ENCODE measurements at regions of chr1 and their contacts with region 1.

Region 1: GRCh38 chr1:66253330-66253921 is 280.5 kb upstream of the SGIP1 start:
- DNase-seq: peak; percentile 89
- H3K4me3 ChIP-seq: no peak overlapping the region
- H3K27ac ChIP-seq: no peak overlapping the region
- H3K4me1 ChIP-seq: peaks cover 6% of the 10 kb centered on the region
- H3K27me3 ChIP-seq: no peaks in the 10 kb centered on the region
- CTCF ChIP-seq: peak; percentile 60
- POLR2A ChIP-seq: no peak

Region 2: GRCh38 chr1:66242646-66243547 is 10.5 kb before region 1 on chr1:
- CTCF ChIA-PET with region 1: interaction called, 10 read pairs
- POLR2A ChIA-PET with region 1: no interaction called
- dilution Hi-C with region 1: no loop called
- intact Hi-C with region 1: no loop called
- DNase-seq: peak; percentile 85
- H3K4me3 ChIP-seq: no peak overlapping the region
- H3K27ac ChIP-seq: peak overlapping the region; percentile 64
- H3K4me1 ChIP-seq: peaks cover 26% of the 10 kb centered on the region
- H3K27me3 ChIP-seq: no peaks in the 10 kb centered on the region
- CTCF ChIP-seq: peak; percentile 98 to 100
- POLR2A ChIP-seq: no peak

Region 3: DNA sequence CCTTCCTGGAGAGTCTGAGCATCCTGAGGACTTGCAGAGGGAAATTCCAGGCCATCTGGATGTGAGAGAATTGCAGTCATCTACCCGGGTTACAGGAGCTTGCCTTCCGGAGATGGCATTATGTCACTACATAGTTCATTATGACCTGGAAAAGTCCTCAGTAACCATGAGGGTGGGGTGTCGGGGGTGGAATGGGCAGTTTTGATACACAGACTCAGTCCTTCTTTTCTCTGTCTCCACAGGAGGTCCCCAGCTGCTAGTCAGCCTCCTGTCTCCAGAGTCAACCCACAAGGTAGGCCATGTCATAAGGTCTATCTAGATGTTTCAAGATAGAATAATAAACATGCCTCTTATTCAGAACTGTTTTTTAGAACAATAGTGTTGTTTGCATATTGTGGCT is 12.4 kb after region 1 on chr1:
- CTCF ChIA-PET with region 1: interaction called, 5 read pairs
- POLR2A ChIA-PET with region 1: no interaction called
- dilution Hi-C with region 1: no loop called
- intact Hi-C with region 1: loop called (anchors 1 kb)
- DNase-seq: peak; percentile 83
- H3K4me3 ChIP-seq: no peak overlapping the region
- H3K27ac ChIP-seq: peak overlapping the region; percentile 89
- H3K4me1 ChIP-seq: peaks cover 66% of the 10 kb centered on the region
- H3K27me3 ChIP-seq: no peaks in the 10 kb centered on the region
- CTCF ChIP-seq: no peak
- POLR2A ChIP-seq: no peak

Region 4: DNA sequence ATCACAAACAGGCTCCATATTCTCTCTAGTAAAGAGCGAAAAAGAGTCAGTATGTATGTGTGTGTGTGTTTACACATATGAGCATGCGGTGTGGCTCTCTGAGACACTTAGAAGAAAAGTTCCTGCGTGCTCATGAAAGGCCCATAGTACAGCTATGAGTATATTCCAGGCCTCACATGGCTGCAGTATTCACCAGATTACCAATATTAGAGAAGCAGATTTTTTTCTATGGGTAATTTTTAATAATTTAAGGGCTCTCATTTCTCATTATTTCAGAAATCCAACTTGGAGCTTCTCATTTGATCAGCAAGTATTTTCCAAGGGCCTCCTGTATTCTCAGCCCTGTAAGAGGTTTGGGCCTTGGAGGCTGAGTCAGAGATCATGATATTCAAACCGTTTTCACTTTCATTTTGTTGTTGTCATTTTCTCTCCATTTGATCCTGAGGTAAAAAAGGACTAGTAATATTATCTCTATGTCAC is 47.6 kb after region 1 on chr1:
- CTCF ChIA-PET with region 1: no interaction called
- POLR2A ChIA-PET with region 1: no interaction called
- dilution Hi-C with region 1: no loop called
- intact Hi-C with region 1: no loop called
- DNase-seq: peak; percentile 86
- H3K4me3 ChIP-seq: peak overlapping the region; percentile 2 to 82 (median 64)
- H3K27ac ChIP-seq: peak overlapping the region; percentile 92
- H3K4me1 ChIP-seq: peaks cover 6% of the 10 kb centered on the region
- H3K27me3 ChIP-seq: no peaks in the 10 kb centered on the region
- CTCF ChIP-seq: no peak
- POLR2A ChIP-seq: no peak

Region 5: GRCh38 chr1:66371233-66372005 is 118.0 kb after region 1 on chr1:
- CTCF ChIA-PET with region 1: no interaction called
- POLR2A ChIA-PET with region 1: no interaction called
- dilution Hi-C with region 1: no loop called
- intact Hi-C with region 1: loop called (anchors 1 kb)
- DNase-seq: peak; percentile 98
- H3K4me3 ChIP-seq: peak overlapping the region in 1 of 3 experiments; percentile 29
- H3K27ac ChIP-seq: peak overlapping the region; percentile 99
- H3K4me1 ChIP-seq: peaks cover 60% of the 10 kb centered on the region
- H3K27me3 ChIP-seq: no peaks in the 10 kb centered on the region
- CTCF ChIP-seq: no peak
- POLR2A ChIP-seq: no peak

Region 6: GRCh38 chr1:66436378-66437145 is 183.1 kb after region 1 on chr1:
- CTCF ChIA-PET with region 1: interaction called, 14 read pairs
- POLR2A ChIA-PET with region 1: no interaction called
- dilution Hi-C with region 1: no loop called
- intact Hi-C with region 1: no loop called
- DNase-seq: peak; percentile 46
- H3K4me3 ChIP-seq: no peak overlapping the region
- H3K27ac ChIP-seq: no peak overlapping the region
- H3K4me1 ChIP-seq: peaks cover 34% of the 10 kb centered on the region
- H3K27me3 ChIP-seq: no peaks in the 10 kb centered on the region
- CTCF ChIP-seq: peak; percentile 13 to 31
- POLR2A ChIP-seq: no peak

Region 7: DNA sequence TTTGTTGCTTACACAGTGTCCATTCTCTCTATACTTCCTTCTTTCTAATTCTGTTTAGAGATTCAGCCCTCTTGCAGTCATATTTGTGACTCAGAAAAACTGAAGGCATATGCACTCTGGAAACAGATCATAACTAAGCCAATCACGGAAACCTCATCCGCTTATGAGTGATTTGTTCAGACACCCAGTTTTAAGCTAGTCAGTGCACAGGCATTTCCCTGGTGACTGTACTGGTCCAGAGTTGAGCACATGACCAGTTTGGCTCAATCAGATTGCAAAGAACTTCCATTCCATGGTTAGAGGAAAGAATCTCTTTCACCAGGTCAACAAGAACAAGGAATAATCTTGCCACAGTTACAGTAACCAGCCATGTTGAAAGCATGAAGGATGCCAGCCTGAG is 211.4 kb after region 1 on chr1:
- CTCF ChIA-PET with region 1: no interaction called
- POLR2A ChIA-PET with region 1: no interaction called
- dilution Hi-C with region 1: loop called (anchors 25 kb)
- intact Hi-C with region 1: no loop called
- DNase-seq: peak; percentile 60
- H3K4me3 ChIP-seq: no peak overlapping the region
- H3K27ac ChIP-seq: peak overlapping the region; percentile 49
- H3K4me1 ChIP-seq: peaks cover 12% of the 10 kb centered on the region
- H3K27me3 ChIP-seq: no peaks in the 10 kb centered on the region
- CTCF ChIP-seq: no peak
- POLR2A ChIP-seq: no peak

Region 8: DNA sequence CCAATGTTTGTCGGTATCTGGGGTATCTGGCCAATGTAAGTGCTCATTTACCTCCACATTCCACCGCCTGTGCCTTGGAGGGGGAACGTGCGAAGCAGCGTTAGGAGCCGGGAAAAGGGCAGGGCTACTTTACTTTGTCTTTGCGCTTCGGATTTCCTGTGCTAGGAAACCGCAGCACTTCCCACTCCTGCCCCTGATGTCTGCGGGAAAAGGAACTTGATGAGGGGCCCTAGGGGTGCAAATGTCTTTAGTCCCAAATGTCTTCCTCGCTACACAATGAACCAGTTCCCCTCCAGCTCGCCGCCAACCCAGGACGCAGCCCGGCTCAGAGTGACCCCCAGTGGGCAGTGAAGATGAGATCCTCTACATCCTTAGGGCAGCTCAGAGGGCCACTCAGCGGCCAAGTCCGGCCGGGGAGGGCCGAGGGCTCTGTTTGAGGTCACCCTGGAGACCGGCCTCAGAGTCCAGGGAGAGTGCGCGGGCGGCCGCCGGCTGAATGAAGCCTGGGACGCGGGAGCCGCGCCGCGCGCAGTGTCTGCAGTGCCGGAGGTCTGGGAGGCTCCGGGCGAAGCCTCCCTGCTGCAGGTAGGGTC is 498.7 kb after region 1 on chr1 and contains the start of gene DYNLT5:
- CTCF ChIA-PET with region 1: no interaction called
- POLR2A ChIA-PET with region 1: no interaction called
- dilution Hi-C with region 1: no loop called
- intact Hi-C with region 1: loop called (anchors 1 kb)
- DNase-seq: peak; percentile 72
- H3K4me3 ChIP-seq: peak within 1 kb of the TSS in 2 of 3 experiments; percentile 27 to 41
- H3K27ac ChIP-seq: peak within 1 kb of the TSS; percentile 25
- H3K4me1 ChIP-seq: peaks cover 26% of the 10 kb centered on the region
- H3K27me3 ChIP-seq: no peaks in the 10 kb centered on the region
- CTCF ChIP-seq: peak; percentile 33 to 46
- POLR2A ChIP-seq: no peak
- total RNA-seq, gene DYNLT5: 4.5 and 12.5 TPM in 2 replicates